Posterior vena cava (tissue), 2 donors: ENCODE measurements at regions of chr9 and their contacts with region 1.

Region 1: GRCh38 chr9:117936185-117937130 is 232.3 kb downstream of the TLR4 start:
- DNase-seq: no peak

Region 2: GRCh38 chr9:117952581-117952980 is 16.1 kb after region 1 on chr9:
- intact Hi-C with region 1: loop called in 1 of 2 experiments (anchors 1 kb)
- DNase-seq: no peak